Transverse colon (tissue), 4 donors: ENCODE measurements at regions of chr2 and their contacts with region 1.

Region 1: DNA sequence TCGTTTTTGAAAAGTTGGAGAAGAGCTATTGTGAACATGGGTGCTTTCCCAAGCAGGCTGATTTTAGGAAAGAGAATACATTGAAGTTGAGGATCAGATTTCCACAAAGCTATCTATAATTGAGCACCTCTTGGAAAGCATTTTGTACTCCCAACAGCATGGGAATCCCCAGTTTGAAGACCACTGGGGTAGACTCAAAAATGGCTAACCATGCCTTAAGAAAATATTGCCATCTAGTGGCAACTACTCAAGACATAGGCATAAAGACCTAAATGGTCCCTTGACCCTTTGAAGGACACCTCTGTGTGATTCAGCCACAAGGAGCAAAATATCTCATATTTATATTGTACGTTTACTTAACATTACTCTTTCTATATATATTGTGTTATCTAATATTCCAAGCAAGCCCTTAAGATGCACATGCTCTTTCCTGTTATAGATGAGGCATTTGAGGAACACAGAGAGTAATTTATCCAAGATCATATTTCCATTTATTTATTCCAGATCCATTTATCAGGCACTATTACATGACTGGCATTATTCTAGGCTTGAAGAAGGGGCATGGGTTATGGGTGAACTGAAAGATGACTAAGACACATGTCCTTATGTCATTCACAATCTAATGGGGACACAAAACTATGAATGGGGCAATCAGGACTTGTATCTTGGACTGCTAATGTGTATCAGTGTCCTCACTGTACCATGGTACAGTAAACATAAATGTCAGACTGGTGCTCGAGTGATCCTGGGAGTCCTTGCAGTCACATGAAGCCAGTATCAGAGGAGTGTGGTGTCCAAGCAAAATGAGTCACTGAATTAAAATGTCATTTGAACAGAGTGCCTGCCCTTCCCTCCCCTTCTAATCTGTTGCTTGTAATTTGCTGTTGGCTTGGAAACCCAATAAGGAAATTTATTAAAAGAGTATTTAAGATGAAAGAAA is 121.0 kb upstream of the XPO1 start:
- DNase-seq: no peak
- H3K4me3 ChIP-seq: no peak overlapping the region
- H3K27ac ChIP-seq: no peak overlapping the region
- H3K4me1 ChIP-seq: no peaks in the 10 kb centered on the region
- H3K27me3 ChIP-seq: no peaks in the 10 kb centered on the region
- CTCF ChIP-seq: peak in 4 of 5 experiments; percentile 48 to 53 (median 50)
- EP300 ChIP-seq: no peak
- POLR2A ChIP-seq: no peak

Region 2: DNA sequence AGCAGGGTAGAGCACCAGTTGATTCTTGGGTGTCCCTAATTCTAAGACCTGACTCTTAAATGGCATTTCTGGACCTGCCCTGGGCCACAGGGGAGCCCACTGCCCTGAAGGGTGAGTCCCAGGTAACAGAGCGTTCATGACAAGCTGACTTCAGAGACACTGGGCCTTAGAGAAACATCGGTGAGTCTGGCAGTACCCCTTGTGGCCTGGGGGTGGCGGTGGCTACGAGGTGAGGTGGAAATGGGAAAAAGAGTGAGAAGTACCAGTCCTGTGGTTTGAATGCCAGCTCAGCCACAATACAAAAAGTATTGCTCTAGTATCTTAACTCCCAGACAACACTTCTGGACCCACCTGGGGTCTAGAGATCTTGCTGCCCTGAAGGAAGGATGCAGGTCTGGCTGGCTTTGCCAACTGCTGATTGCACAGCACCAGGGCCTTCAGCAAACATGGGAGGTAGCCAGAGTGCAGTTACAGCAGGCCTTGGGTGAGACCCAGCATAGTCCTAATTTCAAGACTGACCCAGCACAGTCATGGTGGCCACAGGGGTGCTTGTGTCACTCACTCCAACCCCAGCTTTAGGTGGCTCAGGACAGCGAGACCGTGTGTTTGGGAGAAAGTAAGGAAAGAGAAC is 232.7 kb before region 1 on chr2:
- in situ Hi-C with region 1: loop called in 1 of 4 experiments (anchors 25 kb)
- intact Hi-C with region 1: no loop called
- DNase-seq: peak; percentile 76
- H3K4me3 ChIP-seq: no peak overlapping the region
- H3K27ac ChIP-seq: peak overlapping the region in 1 of 4 donors; percentile 9
- H3K4me1 ChIP-seq: peaks cover 4 to 29% (median 17%) of the 10 kb centered on the region in 4 donors
- H3K27me3 ChIP-seq: no peaks in the 10 kb centered on the region
- CTCF ChIP-seq: peak; percentile 61 to 85 (median 77)
- EP300 ChIP-seq: no peak
- POLR2A ChIP-seq: no peak